ENCODE measurements at regions of chr12 and their contacts with region 1.

Region 1: DNA sequence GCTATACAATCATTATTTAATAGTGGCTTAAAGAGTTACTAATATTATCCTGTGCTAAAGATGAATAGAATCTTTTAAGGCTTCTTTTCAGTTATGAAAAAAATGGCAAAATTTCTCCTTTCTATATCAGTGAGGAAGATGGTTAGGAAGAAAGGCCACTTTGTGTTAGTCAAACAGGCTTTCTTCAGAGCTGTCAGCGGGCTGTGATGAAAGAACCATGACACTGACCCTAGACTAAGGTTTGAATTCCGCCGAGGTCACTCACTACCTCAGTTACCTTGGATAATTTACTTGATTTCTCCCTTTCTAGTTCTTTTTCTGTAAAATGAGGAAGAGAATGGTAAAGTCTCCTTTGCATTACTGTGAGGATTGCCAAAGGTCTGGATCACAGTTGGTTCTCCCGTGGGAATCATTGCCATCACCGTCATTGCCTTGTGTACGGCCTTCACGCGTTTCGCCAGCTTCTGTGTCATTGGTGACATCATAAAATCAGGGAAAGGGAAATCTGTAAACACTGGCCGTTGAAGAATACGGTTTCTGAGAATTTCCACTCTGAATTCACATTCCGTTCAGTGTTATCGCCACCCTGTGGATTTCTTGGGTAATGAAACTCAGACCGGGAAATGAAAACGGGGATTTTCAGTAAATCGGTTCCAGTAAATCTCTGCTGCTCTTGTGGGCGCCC is 26.7 kb upstream of the YBX3 start:
- DNase-seq: no peak
- ATAC-seq: peak; percentile 99
- H3K4me3 Mint-ChIP-seq: peak overlapping the region; percentile 70
- H3K27ac Mint-ChIP-seq: no peak overlapping the region
- H3K4me1 Mint-ChIP-seq: peaks cover 8% of the 10 kb centered on the region
- H3K27me3 Mint-ChIP-seq: peaks cover 18% of the 10 kb centered on the region
- CTCF ChIP-seq: no peak

Region 2: DNA sequence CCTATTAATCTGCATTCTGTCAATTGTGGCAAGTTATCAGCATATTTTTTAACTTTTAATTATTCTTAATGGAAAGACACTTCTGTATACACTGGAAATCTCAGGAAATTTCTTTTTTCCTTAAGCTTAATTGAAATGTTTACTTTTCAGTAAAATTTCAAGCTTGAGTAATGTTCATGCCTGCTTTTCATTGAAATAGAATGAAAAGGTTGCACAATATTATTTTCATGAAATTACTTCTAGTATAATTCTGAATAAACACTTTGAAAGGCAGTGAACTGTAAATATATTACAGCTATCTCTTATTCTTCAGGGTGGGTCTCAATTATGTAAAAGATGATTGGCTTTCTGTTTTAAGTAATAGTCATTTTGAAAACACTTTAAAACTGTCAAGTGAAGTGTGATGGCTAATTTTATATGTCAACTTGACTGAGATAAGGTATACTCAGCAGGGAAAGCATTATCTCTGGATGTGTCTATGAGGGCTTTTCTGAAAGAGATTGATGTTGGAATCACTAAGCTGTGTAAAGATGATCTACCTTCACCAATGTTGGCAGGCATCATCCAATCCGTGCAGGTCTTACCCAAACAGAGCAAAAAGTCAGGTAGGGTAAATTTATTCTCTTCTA is 1050.5 kb before region 1 on chr12:
- CTCF ChIA-PET with region 1: no interaction called
- POLR2A ChIA-PET with region 1: no interaction called
- intact Hi-C with region 1: no loop called
- DNase-seq: no peak
- ATAC-seq: peak; percentile 12
- H3K4me3 Mint-ChIP-seq: no peak overlapping the region
- H3K27ac Mint-ChIP-seq: peak overlapping the region; percentile 75
- H3K4me1 Mint-ChIP-seq: peaks cover 84% of the 10 kb centered on the region
- H3K27me3 Mint-ChIP-seq: no peaks in the 10 kb centered on the region
- CTCF ChIP-seq: no peak

Region 3: GRCh38 chr12:10562306-10562933 is 187.4 kb before region 1 on chr12:
- CTCF ChIA-PET with region 1: no interaction called
- POLR2A ChIA-PET with region 1: no interaction called
- intact Hi-C with region 1: loop called (anchors 2 kb)
- DNase-seq: no peak
- ATAC-seq: no peak
- H3K4me3 Mint-ChIP-seq: no peak overlapping the region
- H3K27ac Mint-ChIP-seq: no peak overlapping the region
- H3K4me1 Mint-ChIP-seq: no peaks in the 10 kb centered on the region
- H3K27me3 Mint-ChIP-seq: peaks cover 11% of the 10 kb centered on the region
- CTCF ChIP-seq: peak; percentile 87

Region 4: DNA sequence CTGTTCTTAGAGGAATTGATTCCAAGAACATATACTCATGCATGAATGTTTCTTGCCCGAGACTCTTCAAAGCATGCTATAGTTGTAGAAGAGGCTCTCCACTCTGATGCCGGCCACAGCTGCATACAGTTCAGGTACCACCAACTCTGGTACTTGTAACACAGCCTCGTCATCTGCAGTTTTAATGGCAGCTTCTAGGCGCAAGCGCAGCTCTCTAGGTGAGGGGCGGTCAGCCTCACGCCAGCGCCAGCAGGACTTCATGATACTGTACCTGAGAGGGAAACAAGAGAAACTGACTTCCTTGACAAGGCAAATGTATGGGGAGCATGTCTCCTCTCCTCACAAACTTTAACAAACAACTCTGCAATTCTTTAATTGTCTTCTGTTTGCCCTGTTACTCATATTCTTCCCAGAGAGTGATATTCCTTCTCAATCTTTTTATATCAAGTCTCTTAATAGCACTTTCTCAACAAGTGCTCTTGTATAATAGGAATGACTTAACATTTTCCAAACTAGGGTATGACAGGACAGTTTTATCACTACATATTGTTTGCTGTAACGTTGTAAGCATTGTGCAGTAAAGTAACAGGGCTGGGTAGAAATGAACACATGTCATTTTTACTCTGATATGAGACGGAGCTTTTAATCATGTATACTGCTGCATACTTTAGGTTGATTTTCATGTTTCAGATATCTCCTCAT is 129.6 kb before region 1 on chr12:
- CTCF ChIA-PET with region 1: no interaction called
- POLR2A ChIA-PET with region 1: no interaction called
- intact Hi-C with region 1: no loop called
- DNase-seq: no peak
- ATAC-seq: no peak
- H3K4me3 Mint-ChIP-seq: no peak overlapping the region
- H3K27ac Mint-ChIP-seq: no peak overlapping the region
- H3K4me1 Mint-ChIP-seq: no peaks in the 10 kb centered on the region
- H3K27me3 Mint-ChIP-seq: peaks cover 27% of the 10 kb centered on the region
- CTCF ChIP-seq: no peak

Region 5: DNA sequence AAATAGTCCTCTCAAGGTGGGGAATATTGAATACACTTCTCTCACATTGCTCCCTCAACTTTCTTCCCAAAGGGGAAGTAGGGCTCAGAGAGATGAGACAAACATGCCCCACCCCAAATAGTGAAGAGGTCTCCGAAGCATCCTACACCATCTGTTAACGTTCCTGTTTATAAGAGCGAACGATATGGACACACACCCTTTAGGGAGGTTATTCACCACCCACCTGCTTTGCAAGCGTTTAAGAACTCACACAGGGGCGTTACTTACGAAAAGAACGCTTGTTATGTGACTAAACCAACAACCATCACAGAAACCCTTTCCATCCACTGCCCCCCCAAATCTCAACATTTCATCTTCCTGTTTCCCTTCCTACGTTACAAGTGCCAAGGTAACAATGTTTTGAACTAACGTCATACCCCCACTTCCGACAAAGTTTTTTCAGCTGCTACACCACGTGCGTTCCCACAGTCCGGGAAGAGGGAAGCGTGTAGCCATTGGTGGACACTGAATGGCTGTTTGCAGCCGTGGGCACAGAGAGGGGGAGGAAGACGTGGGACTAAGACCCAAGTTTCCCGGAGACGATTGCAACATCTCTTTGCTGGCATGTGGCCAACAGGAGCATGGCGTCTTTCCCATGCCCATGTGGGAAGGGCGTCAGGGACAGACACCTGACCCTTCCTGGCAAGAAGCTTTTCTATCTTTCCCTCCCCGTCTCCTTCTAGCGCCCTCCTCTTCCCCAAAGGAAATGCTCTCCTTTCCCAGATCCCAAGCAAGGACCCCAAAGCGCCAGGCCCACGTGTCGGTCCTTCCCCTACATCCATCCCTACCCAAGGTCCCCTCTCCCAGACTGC is 28.0 kb before region 1 on chr12:
- CTCF ChIA-PET with region 1: interaction called, 3 read pairs
- POLR2A ChIA-PET with region 1: no interaction called
- intact Hi-C with region 1: loop called (anchors 1 kb)
- DNase-seq: peak; percentile 36
- ATAC-seq: peak; percentile 49
- H3K4me3 Mint-ChIP-seq: peak overlapping the region; percentile 88
- H3K27ac Mint-ChIP-seq: peak overlapping the region; percentile 91
- H3K4me1 Mint-ChIP-seq: peaks cover 33% of the 10 kb centered on the region
- H3K27me3 Mint-ChIP-seq: peaks cover 8% of the 10 kb centered on the region
- CTCF ChIP-seq: no peak

Measured in activated B cell treated with CpG ODN at 0.5 μM for 24 hours (primary cell).